ENCODE measurements at regions of chr22 and their contacts with region 1.

Region 1: GRCh38 chr22:37267135-37267587 is 15.1 kb upstream of the CYTH4 start:
- DNase-seq: peak; percentile 79
- H3K4me3 Mint-ChIP-seq: peak overlapping the region; percentile 75
- H3K27ac Mint-ChIP-seq: peak overlapping the region; percentile 90
- H3K4me1 Mint-ChIP-seq: peaks cover 26% of the 10 kb centered on the region
- H3K27me3 Mint-ChIP-seq: peaks cover 60% of the 10 kb centered on the region

Region 2: DNA sequence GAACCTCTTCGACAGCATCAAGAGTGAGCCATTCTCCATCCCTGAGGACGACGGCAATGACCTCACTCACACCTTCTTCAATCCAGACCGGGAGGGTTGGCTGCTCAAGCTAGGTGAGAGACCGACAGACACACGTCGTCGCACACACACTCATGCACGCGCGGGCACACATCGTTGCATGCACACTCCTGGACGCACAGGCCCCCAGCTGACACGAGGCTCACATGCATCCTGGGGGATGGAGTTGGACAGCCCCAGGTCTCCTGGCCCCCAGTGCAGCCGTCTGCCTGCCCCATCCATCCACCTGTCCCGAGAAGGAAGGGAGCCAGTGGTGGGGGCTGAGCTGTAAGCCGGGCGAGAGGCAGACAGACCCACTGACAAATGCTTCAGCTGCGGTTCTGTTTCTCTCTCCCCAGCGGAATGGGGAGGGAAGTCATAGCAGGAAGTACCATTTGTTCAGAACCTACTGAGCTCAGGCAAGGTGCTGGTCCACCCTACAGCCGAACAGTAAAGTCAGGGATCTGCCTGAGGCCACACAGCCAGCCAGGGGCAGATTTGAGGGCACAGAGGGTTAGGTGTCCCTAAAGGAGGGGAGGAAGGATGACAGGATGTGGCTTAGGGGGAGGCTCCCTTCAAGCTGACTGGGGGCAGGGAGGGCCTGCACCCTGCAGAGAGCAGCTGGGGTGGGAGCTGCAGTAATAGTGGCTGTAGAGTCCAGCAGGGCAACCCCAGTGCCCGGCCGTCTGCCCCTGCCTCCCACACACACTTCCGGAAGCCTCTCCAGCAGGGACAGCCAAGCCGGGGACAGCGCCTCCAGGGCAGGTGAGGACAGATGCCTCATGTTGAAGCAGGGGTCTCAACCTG is 42.3 kb after region 1 on chr22:
- CTCF ChIA-PET with region 1: interaction called, 26 read pairs
- DNase-seq: peak; percentile 79
- H3K4me3 Mint-ChIP-seq: peak overlapping the region; percentile 68
- H3K27ac Mint-ChIP-seq: peak overlapping the region; percentile 100
- H3K4me1 Mint-ChIP-seq: peaks cover 87% of the 10 kb centered on the region
- H3K27me3 Mint-ChIP-seq: no peaks in the 10 kb centered on the region

Region 3: DNA sequence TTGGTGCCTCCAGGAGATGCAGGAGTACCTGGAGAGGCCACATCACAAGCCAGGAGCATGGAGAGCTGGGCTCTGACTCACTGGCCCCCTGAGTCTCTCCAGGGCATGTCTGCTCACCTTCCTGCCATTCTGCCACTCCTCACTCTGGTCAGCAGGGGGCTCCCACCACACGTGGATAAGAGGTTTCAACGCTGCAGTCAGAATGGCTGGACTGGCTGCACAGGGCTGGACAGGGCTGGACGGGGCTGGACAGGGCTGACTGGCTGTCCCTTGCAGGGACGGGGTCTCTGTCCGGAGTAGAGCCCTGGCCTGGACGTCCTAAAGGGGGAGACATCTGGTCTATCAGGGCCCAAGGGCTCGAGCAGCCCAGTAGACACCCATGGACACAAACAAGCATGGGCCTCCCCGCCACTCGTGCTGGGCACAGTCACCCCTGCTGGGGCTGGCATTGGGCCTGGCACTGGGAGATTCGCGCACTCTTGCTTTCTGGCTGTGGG is 49.8 kb after region 1 on chr22:
- CTCF ChIA-PET with region 1: interaction called, 26 read pairs
- DNase-seq: peak; percentile 81
- H3K4me3 Mint-ChIP-seq: no peak overlapping the region
- H3K27ac Mint-ChIP-seq: no peak overlapping the region
- H3K4me1 Mint-ChIP-seq: peaks cover 41% of the 10 kb centered on the region
- H3K27me3 Mint-ChIP-seq: peaks cover 51% of the 10 kb centered on the region

Region 4: GRCh38 chr22:37383341-37383740 is 116.2 kb after region 1 on chr22:
- CTCF ChIA-PET with region 1: no interaction called
- DNase-seq: no peak
- H3K4me3 Mint-ChIP-seq: no peak overlapping the region
- H3K27ac Mint-ChIP-seq: no peak overlapping the region
- H3K4me1 Mint-ChIP-seq: no peaks in the 10 kb centered on the region
- H3K27me3 Mint-ChIP-seq: peaks cover 64% of the 10 kb centered on the region

Region 5: DNA sequence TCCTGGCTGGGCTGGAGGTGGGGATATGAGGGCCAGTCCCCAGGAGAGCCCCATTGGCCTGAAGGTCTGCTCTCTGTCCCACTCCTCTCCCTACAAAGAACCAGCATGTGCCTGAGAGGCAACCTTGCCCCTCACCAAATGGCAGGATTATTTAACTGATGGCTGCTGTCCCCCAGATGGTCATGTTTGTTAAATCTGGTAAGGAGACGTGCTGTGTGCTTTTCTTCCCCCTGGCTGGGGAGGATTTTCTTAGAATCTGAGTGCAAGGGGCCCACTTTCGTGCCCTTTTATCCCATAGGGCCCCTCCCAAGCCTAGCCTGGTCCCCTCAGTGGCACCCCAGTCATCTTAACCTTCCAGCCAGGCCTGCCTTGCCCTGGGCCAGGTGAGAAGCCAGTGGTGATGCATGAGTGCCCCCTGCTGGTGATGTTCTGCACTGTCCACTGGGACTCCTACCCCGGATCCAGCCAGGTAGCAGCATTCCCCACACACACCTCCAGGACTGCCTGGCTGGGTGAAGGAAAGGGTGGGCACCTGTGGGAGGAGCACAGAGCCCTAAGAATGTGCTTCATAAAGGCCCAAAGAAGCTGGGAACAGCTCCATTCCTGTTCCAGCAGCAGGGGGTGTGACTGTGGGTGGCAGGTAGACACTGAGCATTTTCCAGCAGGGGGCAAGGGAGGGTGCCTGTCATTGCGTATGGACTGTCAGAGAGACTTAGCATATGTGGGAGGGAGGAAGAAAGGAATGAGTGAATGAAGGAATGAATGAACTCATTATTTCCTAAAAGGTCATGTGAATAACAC is 190.1 kb after region 1 on chr22:
- CTCF ChIA-PET with region 1: interaction called, 18 read pairs
- DNase-seq: peak; percentile 92
- H3K4me3 Mint-ChIP-seq: no peak overlapping the region
- H3K27ac Mint-ChIP-seq: no peak overlapping the region
- H3K4me1 Mint-ChIP-seq: no peaks in the 10 kb centered on the region
- H3K27me3 Mint-ChIP-seq: peaks cover 9% of the 10 kb centered on the region

Region 6: GRCh38 chr22:37807410-37808293 is 540.5 kb after region 1 on chr22 and contains the start of gene GCAT:
- CTCF ChIA-PET with region 1: no interaction called
- DNase-seq: peak; percentile 96
- H3K4me3 Mint-ChIP-seq: peak within 1 kb of the TSS; percentile 76
- H3K27ac Mint-ChIP-seq: peak within 1 kb of the TSS; percentile 58
- H3K4me1 Mint-ChIP-seq: peaks cover 55% of the 10 kb centered on the region
- H3K27me3 Mint-ChIP-seq: peaks cover 71% of the 10 kb centered on the region